ENCODE measurements at regions of chr16 and their contacts with region 1.

Region 1: GRCh38 chr16:56637814-56638750 is at the start of gene MT1A:
- DNase-seq: peak; percentile 28
- H3K4me3 ChIP-seq: peak within 1 kb of the TSS in 2 of 3 experiments; percentile 38 to 48
- H3K27ac ChIP-seq: no peak within 1 kb of the TSS
- H3K4me1 ChIP-seq: peaks cover 14% of the 10 kb centered on the region
- H3K27me3 ChIP-seq: peaks cover 34 to 44% of the 10 kb centered on the region in 2 experiments
- CTCF ChIP-seq: no peak
- POLR2A ChIP-seq: peak; percentile 53
- total RNA-seq, gene MT1A: 5.4 and 8.4 TPM in 2 replicates

Region 2: DNA sequence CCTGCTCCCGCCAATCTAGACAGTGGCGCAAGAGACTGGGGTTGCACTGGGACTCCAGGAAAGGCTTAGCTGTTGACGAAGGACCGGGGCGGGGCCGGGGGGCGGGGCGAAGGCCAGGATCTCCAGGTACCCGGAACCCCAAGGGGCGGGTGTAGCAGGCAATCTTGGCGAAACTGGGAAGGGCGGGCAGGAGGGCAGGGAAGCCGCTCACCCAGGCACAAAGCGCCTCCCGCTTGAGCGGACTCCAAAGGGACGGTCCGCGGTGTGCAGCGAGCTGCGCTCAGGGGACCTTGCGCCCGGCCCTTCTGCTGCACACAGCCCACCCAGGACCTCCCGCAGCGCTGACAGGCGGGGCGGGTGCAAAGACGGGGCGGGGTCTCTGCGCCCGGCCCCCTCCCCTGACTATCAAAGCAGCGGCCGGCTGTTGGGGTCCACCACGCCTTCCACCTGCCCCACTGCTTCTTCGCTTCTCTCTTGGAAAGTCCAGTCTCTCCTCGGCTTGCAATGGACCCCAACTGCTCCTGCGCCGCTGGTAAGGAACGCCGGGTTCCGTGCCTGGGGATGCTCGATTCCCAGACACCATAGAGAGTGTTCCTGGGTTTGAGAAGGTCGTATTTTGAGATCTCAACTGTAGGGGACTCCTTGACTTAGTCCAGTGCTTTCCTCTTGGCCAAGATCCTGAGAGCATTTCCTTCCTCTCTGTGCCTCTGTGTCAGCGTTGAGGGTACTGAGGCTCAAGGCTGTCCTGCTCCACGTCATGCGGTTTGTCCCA is 19.7 kb after region 1 on chr16 and contains the start of gene MT1F:
- CTCF ChIA-PET with region 1: no interaction called
- POLR2A ChIA-PET with region 1: no interaction called
- dilution Hi-C with region 1: no loop called
- intact Hi-C with region 1: loop called (anchors 2 kb)
- DNase-seq: peak; percentile 35
- H3K4me3 ChIP-seq: peak within 1 kb of the TSS; percentile 26 to 65 (median 36)
- H3K27ac ChIP-seq: no peak within 1 kb of the TSS
- H3K4me1 ChIP-seq: peaks cover 10% of the 10 kb centered on the region
- H3K27me3 ChIP-seq: peaks cover 33 to 37% of the 10 kb centered on the region in 2 experiments
- CTCF ChIP-seq: no peak
- POLR2A ChIP-seq: no peak
- total RNA-seq, gene MT1F: 1.4 and 2.6 TPM in 2 replicates

Region 3: GRCh38 chr16:56681939-56682702 is 44.0 kb after region 1 on chr16 and contains the start of gene MT1X:
- CTCF ChIA-PET with region 1: interaction called, 3 read pairs
- POLR2A ChIA-PET with region 1: no interaction called
- dilution Hi-C with region 1: no loop called
- intact Hi-C with region 1: loop called (anchors 2 kb)
- DNase-seq: peak; percentile 75
- H3K4me3 ChIP-seq: peak within 1 kb of the TSS; percentile 25 to 63 (median 37)
- H3K27ac ChIP-seq: peak within 1 kb of the TSS; percentile 19
- H3K4me1 ChIP-seq: peaks cover 10% of the 10 kb centered on the region
- H3K27me3 ChIP-seq: peaks cover 0 to 3% of the 10 kb centered on the region in 2 experiments
- CTCF ChIP-seq: no peak
- POLR2A ChIP-seq: peak; percentile 95
- total RNA-seq, gene MT1X: 15.6 and 19.2 TPM in 2 replicates

Measured in endothelial cell of umbilical vein (primary cell).